ENCODE measurements at regions of chr7 and their contacts with region 1.

Region 1: GRCh38 chr7:65307651-65308299 is 65.9 kb upstream of the ZNF92 start:
- DNase-seq: no peak

Region 2: DNA sequence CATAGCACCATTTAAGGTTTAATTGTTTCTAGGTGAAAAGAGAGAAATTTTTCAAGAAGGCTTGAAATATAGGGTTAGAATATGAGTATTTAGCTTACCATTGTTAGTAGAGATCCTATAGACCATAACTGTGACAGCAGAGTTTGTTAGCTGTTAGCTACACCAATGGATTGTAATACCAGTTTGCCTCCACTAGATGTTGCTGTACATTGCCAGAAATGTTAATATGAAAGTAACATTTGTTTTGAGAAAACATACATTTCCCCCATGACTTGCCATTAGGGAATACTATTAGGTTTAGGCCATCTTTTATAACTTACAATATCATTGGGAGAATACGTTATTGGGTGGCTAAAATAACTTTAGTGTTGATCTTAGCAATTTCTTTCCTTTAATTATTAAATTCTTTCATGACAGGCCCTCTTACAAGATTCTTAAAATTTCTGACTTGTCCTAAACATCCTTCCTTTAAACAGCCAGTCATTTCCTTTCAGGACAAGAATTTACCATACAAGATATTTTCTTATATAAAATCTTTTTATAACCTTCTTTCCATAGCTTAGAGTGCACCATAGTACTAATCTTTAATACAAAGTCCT is 356.4 kb before region 1 on chr7:
- intact Hi-C with region 1: loop called (anchors 2 kb)
- DNase-seq: no peak

Region 3: DNA sequence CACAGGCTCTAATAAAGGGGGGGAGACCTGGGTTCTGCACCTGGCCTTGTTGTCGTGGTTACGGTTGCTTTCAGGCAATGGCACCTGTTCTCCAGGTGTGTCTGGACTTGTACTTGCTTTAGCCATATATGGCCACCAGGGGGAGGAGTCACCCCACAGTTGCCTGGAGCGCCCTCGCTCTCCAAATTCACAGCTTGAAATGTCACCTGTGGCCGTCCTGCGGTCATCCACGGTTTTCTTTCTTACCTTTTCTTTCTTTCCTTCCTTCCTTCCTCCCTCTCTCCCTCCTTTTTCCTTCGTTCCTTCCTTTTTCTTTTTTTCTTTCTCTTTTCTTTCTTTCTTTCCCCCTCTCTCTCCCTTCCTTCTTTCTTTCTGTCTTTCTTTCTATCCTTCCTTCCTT is 91.3 kb before region 1 on chr7:
- intact Hi-C with region 1: loop called (anchors 5 kb)
- DNase-seq: no peak

Region 4: GRCh38 chr7:65354263-65354662 is 46.5 kb after region 1 on chr7:
- intact Hi-C with region 1: no loop called
- DNase-seq: no peak

Measured in cardiac septum (tissue), 1 donor.